ENCODE measurements at regions of chr2 and their contacts with region 1.

Region 1: GRCh38 chr2:80499095-80499494 is 194.5 kb upstream of the LRRTM1 start:
- DNase-seq: peak; percentile 29
- H3K4me3 ChIP-seq: no peak overlapping the region
- H3K27ac ChIP-seq: no peak overlapping the region
- H3K27me3 ChIP-seq: peaks cover 2% of the 10 kb centered on the region
- CTCF ChIP-seq: peak; percentile 82

Region 2: DNA sequence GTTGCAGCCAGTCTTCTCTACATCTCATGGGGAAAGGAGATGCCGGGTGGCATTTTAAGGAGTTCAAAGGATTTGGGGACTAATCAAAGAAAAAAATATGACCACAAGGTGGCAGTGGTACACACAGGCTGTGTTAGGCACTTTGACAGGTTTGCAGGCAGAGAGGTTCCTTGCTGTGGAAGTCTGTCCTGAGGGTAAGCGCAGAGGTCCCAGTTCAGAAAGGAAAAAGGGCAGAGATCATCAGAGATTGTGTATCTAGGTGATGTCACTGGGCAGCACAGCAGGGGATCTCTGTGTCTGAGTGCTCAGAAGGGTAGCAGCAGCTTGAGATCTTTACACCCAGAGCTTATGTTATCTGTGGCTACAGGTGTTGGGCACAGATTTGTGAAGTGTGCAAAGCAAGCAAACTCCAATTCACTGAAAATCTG is 425.9 kb before region 1 on chr2:
- CTCF ChIA-PET with region 1: interaction called, 63 read pairs
- POLR2A ChIA-PET with region 1: no interaction called
- DNase-seq: peak; percentile 43
- H3K4me3 ChIP-seq: no peak overlapping the region
- H3K27ac ChIP-seq: no peak overlapping the region
- H3K27me3 ChIP-seq: no peaks in the 10 kb centered on the region
- CTCF ChIP-seq: peak; percentile 79

Region 3: GRCh38 chr2:80255918-80256781 is 242.9 kb before region 1 on chr2:
- CTCF ChIA-PET with region 1: interaction called, 12 read pairs
- POLR2A ChIA-PET with region 1: no interaction called
- DNase-seq: no peak
- H3K4me3 ChIP-seq: no peak overlapping the region
- H3K27ac ChIP-seq: no peak overlapping the region
- H3K27me3 ChIP-seq: no peaks in the 10 kb centered on the region
- CTCF ChIP-seq: peak; percentile 52

Region 4: GRCh38 chr2:80288576-80288975 is 210.5 kb before region 1 on chr2:
- CTCF ChIA-PET with region 1: interaction called, 18 read pairs
- POLR2A ChIA-PET with region 1: no interaction called
- DNase-seq: no peak
- H3K4me3 ChIP-seq: no peak overlapping the region
- H3K27ac ChIP-seq: no peak overlapping the region
- H3K27me3 ChIP-seq: no peaks in the 10 kb centered on the region
- CTCF ChIP-seq: peak; percentile 18; the same call in 1 of the 2 replicates

Region 5: DNA sequence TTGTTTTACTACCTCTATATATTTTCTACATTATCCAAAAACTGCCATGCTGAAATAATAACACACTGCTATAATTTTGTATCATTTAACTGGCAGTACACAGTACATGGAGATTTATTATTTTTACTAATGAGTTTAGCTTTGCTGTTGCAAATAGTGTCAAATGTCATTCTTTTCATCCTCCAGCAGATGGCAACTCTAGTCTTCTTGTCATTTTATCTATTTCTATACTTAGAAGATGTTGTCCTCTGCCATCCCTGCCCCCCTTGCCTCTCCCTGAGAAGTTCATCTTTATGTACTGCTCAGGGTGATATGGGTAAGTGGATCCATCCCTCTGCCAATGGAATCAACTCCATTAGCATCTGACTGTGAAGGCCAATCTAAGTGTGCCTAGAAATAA is 172.9 kb before region 1 on chr2:
- CTCF ChIA-PET with region 1: interaction called, 182 read pairs
- POLR2A ChIA-PET with region 1: no interaction called
- DNase-seq: no peak
- H3K4me3 ChIP-seq: no peak overlapping the region
- H3K27ac ChIP-seq: no peak overlapping the region
- H3K27me3 ChIP-seq: peaks cover 9% of the 10 kb centered on the region
- CTCF ChIP-seq: peak; percentile 40

Region 6: DNA sequence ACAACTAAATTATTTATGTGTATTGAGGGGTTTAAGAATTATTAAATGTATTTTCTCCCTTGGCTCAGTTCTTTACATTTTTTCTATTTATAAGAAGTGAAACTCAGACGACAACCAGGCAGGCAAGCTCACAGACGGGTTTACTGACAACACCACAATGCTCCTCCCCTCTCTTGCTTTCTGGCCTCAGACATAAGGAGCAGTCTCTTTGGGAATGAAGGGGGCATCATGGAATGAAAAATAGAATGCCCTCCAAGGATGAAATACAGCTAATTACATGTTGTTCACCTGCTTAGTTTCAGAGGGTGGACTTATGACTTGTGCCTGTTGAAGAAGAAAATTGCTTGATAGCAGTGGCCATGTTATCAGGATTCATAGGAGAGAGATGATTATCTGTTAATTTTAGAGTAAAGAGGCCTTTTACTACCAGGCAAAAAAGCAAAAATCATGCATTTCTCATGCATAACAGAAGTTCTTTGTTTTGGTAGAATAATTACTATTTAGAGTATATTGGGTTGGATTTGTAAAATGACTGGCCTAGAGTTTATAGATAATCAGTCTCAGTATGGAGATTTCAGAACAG is 22.5 kb before region 1 on chr2:
- CTCF ChIA-PET with region 1: interaction called, 15 read pairs
- POLR2A ChIA-PET with region 1: no interaction called
- DNase-seq: no peak
- H3K4me3 ChIP-seq: no peak overlapping the region
- H3K27ac ChIP-seq: no peak overlapping the region
- H3K27me3 ChIP-seq: no peaks in the 10 kb centered on the region
- CTCF ChIP-seq: no peak

Region 7: GRCh38 chr2:80621656-80622055 is 122.6 kb after region 1 on chr2:
- CTCF ChIA-PET with region 1: no interaction called
- POLR2A ChIA-PET with region 1: no interaction called
- DNase-seq: no peak
- H3K4me3 ChIP-seq: no peak overlapping the region
- H3K27ac ChIP-seq: no peak overlapping the region
- H3K27me3 ChIP-seq: no peaks in the 10 kb centered on the region
- CTCF ChIP-seq: no peak